ENCODE measurements at regions of chr3 and their contacts with region 1.

Region 1: DNA sequence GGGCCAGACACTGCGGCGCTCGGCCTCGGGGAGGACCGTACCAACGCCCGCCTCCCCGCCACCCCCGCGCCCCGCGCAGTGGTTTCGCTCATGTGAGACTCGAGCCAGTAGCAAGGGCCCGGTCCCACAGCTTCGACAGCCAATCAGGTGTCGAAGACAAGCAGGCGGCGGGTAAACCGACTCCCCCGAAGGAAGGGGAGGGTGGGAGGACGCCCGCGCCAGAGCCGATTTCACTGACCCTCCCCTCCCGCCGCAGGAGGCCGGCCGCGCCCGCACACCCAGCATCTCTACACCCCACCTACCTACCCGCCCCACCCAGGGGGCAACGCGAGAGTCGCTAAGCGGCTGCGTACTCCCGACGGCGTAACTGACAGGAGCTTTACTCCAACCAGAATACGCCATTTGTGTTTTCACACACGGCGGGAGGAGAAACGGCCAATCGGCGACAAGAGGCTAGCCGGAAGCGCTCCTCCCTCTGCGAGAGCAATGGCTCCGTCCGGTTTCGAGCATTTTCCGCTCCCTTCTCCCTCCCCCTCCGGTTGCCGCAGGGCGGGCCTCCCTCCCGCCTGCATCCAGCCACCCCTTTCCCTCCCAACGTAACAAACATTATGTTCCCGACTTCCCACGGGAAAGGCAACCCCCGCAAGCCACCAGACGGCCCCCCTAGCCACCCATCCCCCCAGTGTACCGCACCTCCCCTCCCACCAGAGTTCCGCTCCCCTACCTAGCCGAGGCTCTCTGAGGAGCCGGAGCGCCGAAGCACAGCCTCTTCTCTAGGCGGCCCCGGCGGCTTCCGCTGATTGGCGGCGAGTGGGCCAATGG is 504 bp upstream of the SETD5 start:
- DNase-seq: peak; percentile 98
- H3K4me3 Mint-ChIP-seq: peak overlapping the region; percentile 91
- H3K27ac Mint-ChIP-seq: peak overlapping the region; percentile 96
- H3K4me1 Mint-ChIP-seq: peaks cover 65% of the 10 kb centered on the region
- H3K27me3 Mint-ChIP-seq: no peaks in the 10 kb centered on the region

Region 2: GRCh38 chr3:9352917-9353752 is 43.8 kb before region 1 on chr3:
- CTCF ChIA-PET with region 1: interaction called, 4 read pairs
- intact Hi-C with region 1: loop called (anchors 1 kb)
- DNase-seq: peak; percentile 78
- H3K4me3 Mint-ChIP-seq: no peak overlapping the region
- H3K27ac Mint-ChIP-seq: peak overlapping the region; percentile 57
- H3K4me1 Mint-ChIP-seq: peaks cover 22% of the 10 kb centered on the region
- H3K27me3 Mint-ChIP-seq: no peaks in the 10 kb centered on the region

Region 3: DNA sequence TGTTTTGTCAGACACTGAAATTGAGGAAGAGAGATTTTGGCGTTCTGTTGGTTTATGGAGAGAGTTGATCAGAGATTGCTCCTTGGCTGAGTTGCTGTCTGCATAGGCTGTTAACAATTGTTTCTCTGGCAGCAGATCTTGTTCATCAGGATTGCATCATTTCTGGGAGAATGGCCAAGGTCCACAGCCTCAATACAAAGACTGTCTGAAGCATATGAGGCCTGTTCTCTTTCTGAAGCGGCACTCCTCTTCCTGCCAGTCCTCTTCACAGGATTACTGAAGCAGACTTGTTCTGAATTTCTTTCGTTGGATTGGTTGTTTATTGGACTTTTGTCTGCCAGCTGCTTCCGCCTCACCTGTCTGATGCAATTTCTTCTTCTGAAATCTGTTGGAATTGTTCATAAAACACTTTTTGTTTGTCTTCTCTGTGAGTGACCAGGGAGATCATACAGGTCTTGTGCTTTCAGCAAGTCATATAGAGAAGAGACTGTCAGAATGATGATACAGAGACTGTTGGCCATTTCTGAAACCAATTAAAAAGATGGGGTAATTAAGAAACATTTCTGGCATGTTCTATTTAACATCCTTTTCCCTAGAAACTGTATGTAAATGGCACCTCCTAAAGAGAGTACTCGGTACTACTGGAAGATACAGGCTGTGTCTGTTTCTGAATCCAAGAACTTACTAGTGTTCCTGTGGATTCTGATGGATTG is 26.0 kb after region 1 on chr3:
- CTCF ChIA-PET with region 1: interaction called, 8 read pairs
- intact Hi-C with region 1: loop called (anchors 1 kb)
- DNase-seq: peak; percentile 47
- H3K4me3 Mint-ChIP-seq: peak overlapping the region; percentile 19
- H3K27ac Mint-ChIP-seq: peak overlapping the region; percentile 92
- H3K4me1 Mint-ChIP-seq: peaks cover 45% of the 10 kb centered on the region
- H3K27me3 Mint-ChIP-seq: no peaks in the 10 kb centered on the region

Region 4: DNA sequence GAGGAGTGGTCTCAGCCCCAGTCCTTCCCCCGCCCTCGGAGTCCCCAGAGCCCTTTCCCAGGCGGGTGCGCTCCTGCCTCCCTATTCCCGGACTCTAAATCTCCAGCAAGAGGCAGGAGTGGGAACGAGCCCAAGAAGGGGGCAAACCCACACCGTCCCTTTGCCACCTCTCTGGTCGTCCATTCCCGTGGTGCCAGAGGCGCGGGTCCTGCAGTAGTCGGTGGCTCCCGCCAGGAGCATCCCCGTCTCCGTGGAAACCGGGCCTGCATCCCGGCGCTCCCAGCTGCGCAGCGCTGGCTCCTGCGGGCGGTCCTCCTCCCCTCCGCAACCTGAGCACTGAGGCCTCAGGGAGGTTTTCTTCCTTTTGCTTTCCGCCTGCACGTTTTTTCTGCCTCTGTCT is 111.9 kb after region 1 on chr3:
- CTCF ChIA-PET with region 1: no interaction called
- intact Hi-C with region 1: no loop called
- DNase-seq: no peak
- H3K4me3 Mint-ChIP-seq: no peak overlapping the region
- H3K27ac Mint-ChIP-seq: no peak overlapping the region
- H3K4me1 Mint-ChIP-seq: no peaks in the 10 kb centered on the region
- H3K27me3 Mint-ChIP-seq: peaks cover 12% of the 10 kb centered on the region

Region 5: DNA sequence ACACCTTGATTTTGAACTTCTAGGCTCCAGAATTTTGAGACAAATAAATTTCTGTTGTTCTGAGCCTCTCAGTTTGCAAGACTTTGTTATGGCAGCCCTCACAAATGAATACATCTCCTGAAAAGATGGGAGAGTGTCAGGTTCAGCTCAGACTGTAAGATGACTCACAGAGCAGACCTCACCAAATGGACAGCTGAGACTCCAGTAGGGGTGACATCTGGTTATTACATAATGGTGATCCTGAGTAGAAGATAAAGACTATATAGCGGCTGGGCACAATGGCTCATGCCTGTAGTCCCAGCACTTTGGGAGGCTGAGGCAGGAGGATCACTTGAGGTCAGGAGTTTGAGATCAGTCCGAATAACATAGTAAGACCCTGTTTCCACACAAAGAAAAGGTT is 226.2 kb after region 1 on chr3:
- CTCF ChIA-PET with region 1: no interaction called
- intact Hi-C with region 1: no loop called
- DNase-seq: no peak
- H3K4me3 Mint-ChIP-seq: no peak overlapping the region
- H3K27ac Mint-ChIP-seq: no peak overlapping the region
- H3K4me1 Mint-ChIP-seq: no peaks in the 10 kb centered on the region
- H3K27me3 Mint-ChIP-seq: peaks cover 5% of the 10 kb centered on the region

Region 6: GRCh38 chr3:9695345-9695744 is 298.4 kb after region 1 on chr3:
- CTCF ChIA-PET with region 1: no interaction called
- intact Hi-C with region 1: no loop called
- DNase-seq: no peak
- H3K4me3 Mint-ChIP-seq: no peak overlapping the region
- H3K27ac Mint-ChIP-seq: no peak overlapping the region
- H3K4me1 Mint-ChIP-seq: no peaks in the 10 kb centered on the region
- H3K27me3 Mint-ChIP-seq: no peaks in the 10 kb centered on the region

Region 7: DNA sequence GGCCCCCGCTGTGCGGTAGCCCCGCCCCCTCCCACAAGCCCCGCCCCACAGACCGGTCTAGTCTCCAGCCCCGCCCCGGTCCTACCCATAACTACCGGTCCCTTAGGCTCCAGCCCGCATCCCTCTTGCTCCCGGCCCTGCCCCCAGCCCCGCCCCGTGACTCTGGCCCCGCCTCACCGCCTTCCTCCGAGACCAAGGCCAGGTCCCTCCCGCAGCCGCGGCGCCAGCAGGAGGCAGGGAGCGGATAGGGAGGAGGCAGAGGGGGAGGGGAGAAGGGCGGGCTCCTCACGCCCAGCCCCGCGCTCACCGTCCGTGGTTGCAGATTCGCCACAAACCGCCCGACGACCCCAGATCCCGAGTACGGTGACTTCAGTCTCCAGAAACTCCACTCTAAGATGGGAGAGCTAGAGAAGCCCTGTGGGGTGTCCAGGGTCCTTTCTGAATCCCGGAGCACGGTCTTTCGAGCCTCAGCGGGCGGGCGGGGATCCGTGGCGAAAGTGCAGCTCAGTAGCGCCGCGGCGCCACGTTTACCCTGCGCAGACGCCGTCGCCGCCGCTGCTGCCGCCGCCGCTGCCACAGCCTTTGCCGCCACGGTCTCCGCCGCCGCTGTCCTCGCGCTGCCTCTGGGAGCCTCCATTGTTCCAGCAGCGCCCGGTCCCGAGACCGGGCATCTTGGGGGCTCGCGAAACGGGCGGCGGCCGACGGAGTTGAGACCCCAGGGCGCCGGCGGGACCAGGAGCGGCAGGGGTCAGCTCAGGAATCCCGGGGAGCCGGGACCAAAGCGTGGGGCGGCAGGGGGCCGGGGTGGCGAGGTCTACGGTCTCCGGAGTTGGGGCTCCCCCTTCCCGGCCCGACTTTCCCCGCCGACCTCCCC is 334.5 kb after region 1 on chr3 and contains the start of gene BRPF1:
- CTCF ChIA-PET with region 1: no interaction called
- intact Hi-C with region 1: loop called (anchors 1 kb)
- DNase-seq: peak; percentile 100
- H3K4me3 Mint-ChIP-seq: peak within 1 kb of the TSS; percentile 84
- H3K27ac Mint-ChIP-seq: peak within 1 kb of the TSS; percentile 95
- H3K4me1 Mint-ChIP-seq: peaks cover 59% of the 10 kb centered on the region
- H3K27me3 Mint-ChIP-seq: no peaks in the 10 kb centered on the region
- total RNA-seq, gene BRPF1: 16.8 to 19.4 TPM

Region 8: GRCh38 chr3:9890249-9891071 is 493.5 kb after region 1 on chr3 and contains the start of gene JAGN1:
- CTCF ChIA-PET with region 1: no interaction called
- intact Hi-C with region 1: loop called (anchors 1 kb)
- DNase-seq: peak; percentile 95
- H3K4me3 Mint-ChIP-seq: peak within 1 kb of the TSS; percentile 98
- H3K27ac Mint-ChIP-seq: peak within 1 kb of the TSS; percentile 97
- H3K4me1 Mint-ChIP-seq: peaks cover 43% of the 10 kb centered on the region
- H3K27me3 Mint-ChIP-seq: no peaks in the 10 kb centered on the region
- total RNA-seq, gene JAGN1: 11.7 to 13.6 TPM

Region 9: GRCh38 chr3:10115326-10116137 is 718.6 kb after region 1 on chr3 and contains the start of gene BRK1:
- CTCF ChIA-PET with region 1: no interaction called
- intact Hi-C with region 1: loop called (anchors 1 kb)
- DNase-seq: peak; percentile 97
- H3K4me3 Mint-ChIP-seq: peak within 1 kb of the TSS; percentile 92
- H3K27ac Mint-ChIP-seq: peak within 1 kb of the TSS; percentile 94
- H3K4me1 Mint-ChIP-seq: peaks cover 31% of the 10 kb centered on the region
- H3K27me3 Mint-ChIP-seq: no peaks in the 10 kb centered on the region
- total RNA-seq, gene BRK1: 73.6 to 73.7 TPM

Measured in activated naive CD4-positive, alpha-beta T cell treated with anti-CD3 and anti-CD28 coated beads for 36 hours (primary cell).